ENCODE measurements at regions of chr1 and their contacts with region 1.

Region 1: GRCh38 chr1:18956369-18957135 is at the start of gene IFFO2:
- DNase-seq: peak; percentile 99
- H3K4me3 ChIP-seq: peak within 1 kb of the TSS; percentile 72
- H3K27ac ChIP-seq: peak within 1 kb of the TSS; percentile 44
- H3K4me1 ChIP-seq: peaks cover 19% of the 10 kb centered on the region
- H3K27me3 ChIP-seq: no peaks in the 10 kb centered on the region
- CTCF ChIP-seq: no peak
- total RNA-seq, gene IFFO2: 5.6 to 14.0 TPM

Region 2: DNA sequence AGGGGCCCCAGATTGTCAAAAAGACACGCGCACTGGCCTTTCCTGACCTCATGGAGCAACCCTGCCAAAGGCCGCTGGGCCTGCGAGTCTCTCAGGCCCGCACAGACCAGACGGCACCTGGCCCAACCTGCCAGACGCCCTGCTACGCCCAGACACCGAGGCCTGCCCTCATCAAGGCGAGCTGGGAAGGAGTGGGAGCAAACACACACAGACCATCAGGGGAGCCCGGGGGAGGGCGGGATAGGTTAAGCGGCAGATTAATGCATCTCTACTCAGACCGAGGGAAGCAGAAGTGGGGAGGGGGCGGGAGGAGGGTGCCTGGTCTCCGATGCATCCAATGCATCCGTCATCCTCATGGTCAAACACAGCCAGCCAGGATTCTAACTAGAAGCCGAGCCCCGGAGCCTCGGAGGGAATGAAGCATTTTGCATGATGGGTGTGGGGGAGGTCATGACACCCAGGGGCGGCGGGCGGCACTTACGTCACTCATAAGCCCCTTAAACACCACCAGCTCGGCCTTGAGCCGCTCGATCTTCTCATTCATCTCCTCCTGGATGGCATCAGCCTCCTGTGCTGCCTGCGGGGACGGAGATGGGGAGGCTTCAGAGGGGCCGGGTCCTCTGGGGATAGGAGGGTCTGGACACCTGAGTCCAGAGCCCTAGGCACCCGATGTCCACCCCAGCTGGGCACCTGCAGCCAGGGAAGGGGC is 37.2 kb before region 1 on chr1:
- intact Hi-C with region 1: loop called (anchors 5 kb)
- DNase-seq: no peak
- H3K4me3 ChIP-seq: no peak overlapping the region
- H3K27ac ChIP-seq: no peak overlapping the region
- H3K4me1 ChIP-seq: peaks cover 9% of the 10 kb centered on the region
- H3K27me3 ChIP-seq: no peaks in the 10 kb centered on the region
- CTCF ChIP-seq: no peak

Region 3: GRCh38 chr1:19010995-19011844 is 54.7 kb after region 1 on chr1:
- intact Hi-C with region 1: loop called (anchors 5 kb)
- DNase-seq: peak; percentile 87
- H3K4me3 ChIP-seq: no peak overlapping the region
- H3K27ac ChIP-seq: peak overlapping the region; percentile 93
- H3K4me1 ChIP-seq: peaks cover 23% of the 10 kb centered on the region
- H3K27me3 ChIP-seq: no peaks in the 10 kb centered on the region
- CTCF ChIP-seq: no peak